B cell (primary cell): ENCODE measurements at regions of chr17 and their contacts with region 1.

Region 1: GRCh38 chr17:76501018-76501826 is at the start of gene RHBDF2:
- DNase-seq: peak; percentile 95
- ATAC-seq: peak; percentile 85
- H3K4me3 ChIP-seq: peak within 1 kb of the TSS; percentile 46 to 97 (median 95)
- H3K4me3 Mint-ChIP-seq: peak within 1 kb of the TSS; percentile 97
- H3K27ac ChIP-seq: peak within 1 kb of the TSS; percentile 78 to 94
- H3K27ac Mint-ChIP-seq: peak within 1 kb of the TSS; percentile 99
- H3K4me1 ChIP-seq: peaks cover 38 to 63% of the 10 kb centered on the region in 2 donors
- H3K4me1 Mint-ChIP-seq: peaks cover 56% of the 10 kb centered on the region
- H3K27me3 ChIP-seq: no peaks in the 10 kb centered on the region
- H3K27me3 Mint-ChIP-seq: no peaks in the 10 kb centered on the region
- CTCF ChIP-seq: no peak
- total RNA-seq, gene RHBDF2: 482 and 509 TPM in 2 replicates

Region 2: GRCh38 chr17:76452660-76453430 is 48.4 kb before region 1 on chr17 and contains the start of gene UBE2O:
- CTCF ChIA-PET with region 1: interaction called, 442 read pairs
- POLR2A ChIA-PET with region 1: interaction called, 5 read pairs
- intact Hi-C with region 1: loop called (anchors 1 kb)
- DNase-seq: peak; percentile 95
- ATAC-seq: peak; percentile 93
- H3K4me3 ChIP-seq: peak within 1 kb of the TSS; percentile 46 to 91 (median 72)
- H3K4me3 Mint-ChIP-seq: peak within 1 kb of the TSS; percentile 88
- H3K27ac ChIP-seq: peak within 1 kb of the TSS; percentile 46 to 77
- H3K27ac Mint-ChIP-seq: peak within 1 kb of the TSS; percentile 88
- H3K4me1 ChIP-seq: peaks cover 22 to 26% of the 10 kb centered on the region in 2 donors
- H3K4me1 Mint-ChIP-seq: peaks cover 37% of the 10 kb centered on the region
- H3K27me3 ChIP-seq: no peaks in the 10 kb centered on the region
- H3K27me3 Mint-ChIP-seq: no peaks in the 10 kb centered on the region
- CTCF ChIP-seq: peak; percentile 62
- total RNA-seq, gene UBE2O: 54.0 and 62.4 TPM in 2 replicates

Region 3: GRCh38 chr17:76515274-76515949 is 14.2 kb after region 1 on chr17:
- CTCF ChIA-PET with region 1: interaction called, 43 read pairs
- POLR2A ChIA-PET with region 1: interaction called, 6 read pairs
- intact Hi-C with region 1: no loop called
- DNase-seq: peak; percentile 93
- ATAC-seq: peak; percentile 87
- H3K4me3 ChIP-seq: peak overlapping the region in 4 of 5 experiments; percentile 21 to 38 (median 26)
- H3K4me3 Mint-ChIP-seq: peak overlapping the region; percentile 85
- H3K27ac ChIP-seq: peak overlapping the region; percentile 71 to 84
- H3K27ac Mint-ChIP-seq: peak overlapping the region; percentile 98
- H3K4me1 ChIP-seq: peaks cover 17 to 18% of the 10 kb centered on the region in 2 donors
- H3K4me1 Mint-ChIP-seq: peaks cover 31% of the 10 kb centered on the region
- H3K27me3 ChIP-seq: peaks cover 0 to 1% (median 0%) of the 10 kb centered on the region in 4 experiments
- H3K27me3 Mint-ChIP-seq: no peaks in the 10 kb centered on the region
- CTCF ChIP-seq: no peak